HCT116 (cell line): ENCODE measurements at regions of chr10 and their contacts with region 1.

Region 1: GRCh38 chr10:100518761-100519241 is 860 bp downstream of the SEC31B start:
- DNase-seq: peak; percentile 41
- ATAC-seq: peak; percentile 79
- H3K4me3 ChIP-seq: no peak overlapping the region
- H3K27ac ChIP-seq: no peak overlapping the region
- H3K4me1 ChIP-seq: no peaks in the 10 kb centered on the region
- H3K27me3 ChIP-seq: no peaks in the 10 kb centered on the region
- CTCF ChIP-seq: peak; percentile 83 to 89 (median 87)
- POLR2A ChIP-seq: no peak
- RAD21 ChIP-seq: peak; percentile 82

Region 2: DNA sequence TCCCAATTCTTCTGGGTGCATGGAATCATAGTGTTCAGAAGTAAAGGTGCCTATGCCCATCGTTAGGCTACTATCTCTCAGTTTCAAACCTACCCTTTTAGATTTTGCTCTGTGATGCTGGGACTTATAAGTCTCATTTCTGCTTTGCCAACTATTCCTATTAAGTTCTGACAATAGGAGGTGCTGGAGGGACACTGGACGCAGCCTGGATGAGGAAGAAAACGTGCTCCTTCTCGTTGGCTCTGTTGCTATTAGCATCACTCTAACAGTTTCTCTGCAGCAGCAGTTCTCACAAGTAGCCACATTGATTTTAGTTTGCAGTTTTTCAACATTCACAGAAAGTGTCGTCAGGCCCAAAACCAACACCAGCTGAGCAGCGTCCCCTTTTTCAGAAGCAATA is 663.9 kb before region 1 on chr10:
- CTCF ChIA-PET with region 1: no interaction called
- POLR2A ChIA-PET with region 1: no interaction called
- RAD21 ChIA-PET with region 1: no interaction called
- intact Hi-C with region 1: loop called (anchors 10 kb)
- DNase-seq: peak; percentile 51
- ATAC-seq: peak; percentile 63
- H3K4me3 ChIP-seq: no peak overlapping the region
- H3K27ac ChIP-seq: no peak overlapping the region
- H3K4me1 ChIP-seq: peaks cover 3 to 7% of the 10 kb centered on the region in 2 experiments; a peak in 2 of 4 replicates
- H3K27me3 ChIP-seq: no peaks in the 10 kb centered on the region
- CTCF ChIP-seq: peak; percentile 60 to 81 (median 71)
- POLR2A ChIP-seq: no peak
- RAD21 ChIP-seq: peak; percentile 94

Region 3: DNA sequence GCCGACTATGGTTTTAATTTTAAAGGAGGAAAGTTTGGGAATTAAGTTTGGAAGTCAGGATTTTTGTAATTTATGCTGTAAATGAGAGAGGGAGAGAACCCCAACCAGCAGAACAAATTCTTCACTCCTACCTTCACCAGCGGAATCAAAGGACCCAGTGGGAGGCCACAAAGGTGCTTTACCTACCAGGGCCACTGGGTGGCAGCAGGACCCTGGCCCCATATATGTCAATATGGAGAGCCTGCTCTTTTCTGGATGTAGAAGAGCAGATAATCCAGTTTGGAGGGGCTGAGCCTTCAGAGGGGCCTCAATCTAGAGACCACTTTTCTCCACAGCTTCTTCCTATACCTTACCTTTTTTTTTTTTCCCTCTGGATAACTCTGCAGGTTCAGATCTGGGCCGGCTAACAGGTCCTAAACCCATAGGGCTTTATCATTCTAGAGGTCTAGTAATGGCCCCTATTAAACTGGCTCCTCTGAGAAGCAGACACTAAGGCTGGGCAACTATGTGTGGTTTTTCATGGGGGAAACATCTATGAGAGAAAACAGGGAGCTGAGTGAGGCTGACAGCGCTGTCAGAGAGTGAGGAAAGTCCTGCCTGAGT is 180.3 kb before region 1 on chr10:
- CTCF ChIA-PET with region 1: interaction called, 11 read pairs
- POLR2A ChIA-PET with region 1: interaction called, 3 read pairs
- RAD21 ChIA-PET with region 1: interaction called, 4 to 5 read pairs
- intact Hi-C with region 1: no loop called
- DNase-seq: peak; percentile 56
- ATAC-seq: peak; percentile 74
- H3K4me3 ChIP-seq: no peak overlapping the region
- H3K27ac ChIP-seq: no peak overlapping the region; the same call in 1 of the 2 replicates
- H3K4me1 ChIP-seq: peaks cover 3 to 10% of the 10 kb centered on the region in 2 experiments; a peak in 3 of 4 replicates
- H3K27me3 ChIP-seq: 0 out of 2 replicates have a peak, but pooled peaks cover 3% of the 10 kb centered on the region
- CTCF ChIP-seq: peak in 2 of 3 experiments; percentile 99; a peak in 4 of 6 replicates
- POLR2A ChIP-seq: no peak
- RAD21 ChIP-seq: no peak

Region 4: GRCh38 chr10:100433253-100434240 is 85.3 kb before region 1 on chr10:
- CTCF ChIA-PET with region 1: interaction called, 30 read pairs
- POLR2A ChIA-PET with region 1: no interaction called
- RAD21 ChIA-PET with region 1: interaction called, 3 to 7 read pairs
- intact Hi-C with region 1: loop called (anchors 1 kb)
- DNase-seq: peak; percentile 97
- ATAC-seq: peak; percentile 96
- H3K4me3 ChIP-seq: no peak overlapping the region
- H3K27ac ChIP-seq: no peak overlapping the region
- H3K4me1 ChIP-seq: peaks cover 0 to 9% of the 10 kb centered on the region in 2 experiments; a peak in 2 of 4 replicates
- H3K27me3 ChIP-seq: no peaks in the 10 kb centered on the region
- CTCF ChIP-seq: peak; percentile 100
- POLR2A ChIP-seq: no peak
- RAD21 ChIP-seq: peak; percentile 100

Region 5: DNA sequence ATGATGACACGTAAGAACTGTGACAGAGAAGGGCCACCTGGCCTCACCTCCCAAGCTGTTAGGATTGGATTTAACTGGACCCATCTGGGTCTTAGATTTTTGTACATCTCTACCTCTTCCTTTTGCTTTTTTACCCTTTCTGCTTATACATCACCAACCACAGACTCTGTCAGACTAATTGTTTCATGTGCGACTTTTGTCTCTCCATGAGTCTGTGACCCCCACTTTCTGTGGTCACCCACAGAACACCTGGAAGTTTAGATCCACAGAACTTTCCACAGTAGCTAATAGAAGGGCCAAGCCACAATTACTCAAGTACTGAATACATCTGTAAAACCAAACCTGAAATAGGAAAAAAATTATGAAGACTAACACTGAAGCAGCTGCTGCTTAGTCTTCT is 22.2 kb before region 1 on chr10:
- CTCF ChIA-PET with region 1: interaction called, 13 read pairs
- POLR2A ChIA-PET with region 1: no interaction called
- RAD21 ChIA-PET with region 1: no interaction called
- intact Hi-C with region 1: no loop called
- DNase-seq: no peak
- ATAC-seq: no peak
- H3K4me3 ChIP-seq: no peak overlapping the region
- H3K27ac ChIP-seq: no peak overlapping the region
- H3K4me1 ChIP-seq: no peaks in the 10 kb centered on the region
- H3K27me3 ChIP-seq: no peaks in the 10 kb centered on the region
- CTCF ChIP-seq: no peak
- POLR2A ChIP-seq: no peak
- RAD21 ChIP-seq: no peak

Region 6: DNA sequence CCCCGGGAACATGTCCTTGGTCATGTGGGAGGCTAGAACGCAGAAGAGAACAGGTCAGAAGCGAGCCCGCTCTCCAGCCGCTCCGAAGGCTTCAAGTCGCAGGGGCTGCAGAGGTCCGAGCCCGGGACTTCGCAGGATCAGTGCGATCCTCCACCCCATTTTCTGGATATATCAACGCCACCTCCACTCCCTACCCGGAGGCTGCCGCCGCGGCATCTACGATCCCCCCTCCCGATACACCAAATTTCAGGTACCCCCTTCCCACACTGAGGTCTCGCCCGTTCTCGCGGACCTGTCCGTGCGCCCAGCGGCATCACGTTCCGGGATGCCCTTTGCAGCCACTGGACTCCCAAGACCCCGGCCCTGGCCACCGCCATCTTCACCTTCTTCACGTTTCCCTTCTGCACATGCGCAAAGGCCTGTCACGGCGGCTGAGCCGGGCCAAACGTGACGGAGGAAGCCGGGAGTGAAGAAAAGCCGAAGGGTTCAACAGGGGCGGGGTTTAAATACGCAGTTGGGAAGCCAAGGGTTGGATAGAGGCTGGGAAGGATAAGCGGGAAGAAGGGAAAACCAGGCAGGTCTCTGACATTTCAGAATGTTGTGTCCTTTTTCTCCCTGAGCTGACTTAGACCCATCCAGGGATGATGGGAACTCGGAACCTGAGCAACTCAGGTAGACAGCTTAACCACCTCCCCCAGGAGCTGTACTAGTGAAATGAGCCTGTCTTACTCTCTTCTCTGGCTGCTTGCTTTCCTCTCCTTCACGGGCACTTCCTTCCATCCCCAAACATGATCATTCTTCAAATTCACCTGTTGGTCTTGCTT is 10.9 kb after region 1 on chr10 and contains the start of gene NDUFB8:
- CTCF ChIA-PET with region 1: interaction called, 36 read pairs
- POLR2A ChIA-PET with region 1: no interaction called
- RAD21 ChIA-PET with region 1: no interaction called
- intact Hi-C with region 1: no loop called
- DNase-seq: peak; percentile 81
- ATAC-seq: peak; percentile 88
- H3K4me3 ChIP-seq: peak within 1 kb of the TSS; percentile 77 to 94
- H3K27ac ChIP-seq: peak within 1 kb of the TSS; percentile 79
- H3K4me1 ChIP-seq: peaks cover 7 to 18% of the 10 kb centered on the region in 2 experiments; a peak in 3 of 4 replicates
- H3K27me3 ChIP-seq: no peaks in the 10 kb centered on the region
- CTCF ChIP-seq: no peak
- POLR2A ChIP-seq: peak; percentile 91
- RAD21 ChIP-seq: no peak
- total RNA-seq, gene NDUFB8: 243 TPM

Region 7: GRCh38 chr10:100872034-100872791 is 353.4 kb after region 1 on chr10:
- CTCF ChIA-PET with region 1: interaction called, 54 read pairs
- POLR2A ChIA-PET with region 1: no interaction called
- RAD21 ChIA-PET with region 1: no interaction called
- intact Hi-C with region 1: no loop called
- DNase-seq: peak; percentile 51
- ATAC-seq: peak; percentile 96
- H3K4me3 ChIP-seq: no peak overlapping the region
- H3K27ac ChIP-seq: no peak overlapping the region
- H3K4me1 ChIP-seq: peaks cover 0 to 7% of the 10 kb centered on the region in 2 experiments; a peak in 1 of 4 replicates
- H3K27me3 ChIP-seq: no peaks in the 10 kb centered on the region
- CTCF ChIP-seq: peak; percentile 88 to 95 (median 94)
- POLR2A ChIP-seq: no peak
- RAD21 ChIP-seq: peak; percentile 94